GM12878 (cell line): ENCODE measurements at regions of chr10 and their contacts with region 1.

Region 1: GRCh38 chr10:106795619-106796018 is 368.9 kb downstream of the SORCS1 start:
- DNase-seq: peak; percentile 48
- ATAC-seq: peak; percentile 98
- H3K4me3 ChIP-seq: no peak overlapping the region
- H3K27ac ChIP-seq: no peak overlapping the region
- H3K4me1 ChIP-seq: no peaks in the 10 kb centered on the region
- H3K27me3 ChIP-seq: no peaks in the 10 kb centered on the region
- CTCF ChIP-seq: peak; percentile 57 to 78 (median 71)
- EP300 ChIP-seq: no peak
- POLR2A ChIP-seq: no peak
- RAD21 ChIP-seq: peak; percentile 88

Region 2: GRCh38 chr10:106696239-106696638 is 99.4 kb before region 1 on chr10:
- CTCF ChIA-PET with region 1: no interaction called
- POLR2A ChIA-PET with region 1: no interaction called
- RAD21 ChIA-PET with region 1: no interaction called
- SMC1A ChIA-PET with region 1: no interaction called
- in situ Hi-C with region 1: no loop called
- intact Hi-C with region 1: no loop called
- DNase-seq: no peak
- ATAC-seq: no peak
- H3K4me3 ChIP-seq: no peak overlapping the region
- H3K27ac ChIP-seq: no peak overlapping the region
- H3K4me1 ChIP-seq: no peaks in the 10 kb centered on the region
- H3K27me3 ChIP-seq: no peaks in the 10 kb centered on the region; a peak in 1 of 4 replicates
- CTCF ChIP-seq: no peak
- EP300 ChIP-seq: no peak
- POLR2A ChIP-seq: no peak
- RAD21 ChIP-seq: no peak

Region 3: GRCh38 chr10:106711313-106711906 is 84.2 kb before region 1 on chr10:
- CTCF ChIA-PET with region 1: interaction called, 16 read pairs
- POLR2A ChIA-PET with region 1: no interaction called
- RAD21 ChIA-PET with region 1: interaction called, 10 read pairs
- SMC1A ChIA-PET with region 1: interaction called, 8 read pairs
- in situ Hi-C with region 1: no loop called
- intact Hi-C with region 1: no loop called
- DNase-seq: no peak
- ATAC-seq: peak; percentile 57
- H3K4me3 ChIP-seq: no peak overlapping the region
- H3K27ac ChIP-seq: no peak overlapping the region
- H3K4me1 ChIP-seq: no peaks in the 10 kb centered on the region
- H3K27me3 ChIP-seq: no peaks in the 10 kb centered on the region
- CTCF ChIP-seq: peak; percentile 62 to 87 (median 82)
- EP300 ChIP-seq: no peak
- POLR2A ChIP-seq: no peak
- RAD21 ChIP-seq: peak; percentile 73

Region 4: GRCh38 chr10:106757521-106757920 is 38.1 kb before region 1 on chr10:
- CTCF ChIA-PET with region 1: no interaction called
- POLR2A ChIA-PET with region 1: no interaction called
- RAD21 ChIA-PET with region 1: no interaction called
- SMC1A ChIA-PET with region 1: no interaction called
- in situ Hi-C with region 1: no loop called
- intact Hi-C with region 1: no loop called
- DNase-seq: no peak
- ATAC-seq: no peak
- H3K4me3 ChIP-seq: no peak overlapping the region
- H3K27ac ChIP-seq: no peak overlapping the region
- H3K4me1 ChIP-seq: no peaks in the 10 kb centered on the region
- H3K27me3 ChIP-seq: no peaks in the 10 kb centered on the region
- CTCF ChIP-seq: no peak
- EP300 ChIP-seq: no peak
- POLR2A ChIP-seq: no peak
- RAD21 ChIP-seq: no peak

Region 5: DNA sequence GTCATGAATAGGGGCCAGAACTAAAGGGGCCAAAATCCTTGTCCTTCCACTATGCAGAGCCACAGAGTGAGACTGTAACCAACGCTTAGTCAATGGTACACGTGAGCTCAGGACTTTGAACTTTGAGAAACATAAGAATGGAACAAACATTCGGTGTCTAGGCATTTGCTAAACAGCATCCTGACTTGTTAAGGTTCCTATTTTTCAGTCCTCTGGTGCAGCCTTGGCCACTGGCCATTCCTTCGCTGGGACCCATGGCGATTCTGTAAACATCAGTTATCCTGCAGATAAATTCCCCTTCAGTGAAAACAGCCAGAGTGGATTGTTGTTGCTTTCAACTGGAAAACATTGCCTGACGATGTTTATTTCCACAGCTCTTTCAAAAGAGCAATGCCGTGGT is 102.1 kb after region 1 on chr10:
- CTCF ChIA-PET with region 1: no interaction called
- POLR2A ChIA-PET with region 1: no interaction called
- RAD21 ChIA-PET with region 1: no interaction called
- SMC1A ChIA-PET with region 1: no interaction called
- in situ Hi-C with region 1: no loop called
- intact Hi-C with region 1: no loop called
- DNase-seq: no peak
- ATAC-seq: no peak
- H3K4me3 ChIP-seq: no peak overlapping the region
- H3K27ac ChIP-seq: no peak overlapping the region
- H3K4me1 ChIP-seq: no peaks in the 10 kb centered on the region
- H3K27me3 ChIP-seq: no peaks in the 10 kb centered on the region
- CTCF ChIP-seq: no peak
- EP300 ChIP-seq: no peak
- POLR2A ChIP-seq: no peak
- RAD21 ChIP-seq: no peak

Region 6: GRCh38 chr10:106935978-106936451 is 140.4 kb after region 1 on chr10:
- CTCF ChIA-PET with region 1: interaction called, 3 read pairs
- POLR2A ChIA-PET with region 1: no interaction called
- RAD21 ChIA-PET with region 1: interaction called, 3 read pairs
- SMC1A ChIA-PET with region 1: no interaction called
- in situ Hi-C with region 1: no loop called
- intact Hi-C with region 1: loop called (anchors 5 kb)
- DNase-seq: peak; percentile 93
- ATAC-seq: peak; percentile 75
- H3K4me3 ChIP-seq: no peak overlapping the region; the same call in 1 of the 2 replicates
- H3K27ac ChIP-seq: peak overlapping the region; percentile 67
- H3K4me1 ChIP-seq: peaks cover 42% of the 10 kb centered on the region
- H3K27me3 ChIP-seq: no peaks in the 10 kb centered on the region
- CTCF ChIP-seq: no peak
- EP300 ChIP-seq: peak; percentile 38 to 97; a peak in 3 of 4 replicates
- POLR2A ChIP-seq: no peak
- RAD21 ChIP-seq: no peak

Region 7: DNA sequence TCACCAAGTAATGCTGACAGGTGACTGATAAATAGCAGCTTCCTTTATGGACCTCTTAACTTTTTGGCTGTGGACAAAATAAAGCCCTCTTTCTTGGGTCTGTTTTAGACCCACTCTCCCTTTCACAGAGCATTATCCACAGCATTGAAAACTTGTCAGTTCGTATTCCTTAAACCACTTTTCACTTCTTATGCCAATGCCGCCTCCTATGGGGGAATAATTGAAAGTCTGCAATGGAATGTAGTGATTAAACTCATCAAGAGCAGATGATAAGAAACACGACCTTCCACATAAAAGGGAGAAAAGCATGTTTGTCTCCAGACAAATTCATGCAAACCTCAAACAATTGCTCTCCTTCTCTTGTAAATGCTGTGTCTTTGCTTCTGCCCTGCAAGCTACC is 215.5 kb after region 1 on chr10:
- CTCF ChIA-PET with region 1: interaction called, 4 read pairs
- POLR2A ChIA-PET with region 1: no interaction called
- RAD21 ChIA-PET with region 1: no interaction called
- SMC1A ChIA-PET with region 1: interaction called, 3 read pairs
- in situ Hi-C with region 1: no loop called
- intact Hi-C with region 1: loop called (anchors 1 kb)
- DNase-seq: no peak
- ATAC-seq: no peak
- H3K4me3 ChIP-seq: no peak overlapping the region
- H3K27ac ChIP-seq: no peak overlapping the region
- H3K4me1 ChIP-seq: no peaks in the 10 kb centered on the region
- H3K27me3 ChIP-seq: no peaks in the 10 kb centered on the region
- CTCF ChIP-seq: peak in 2 of 3 experiments; percentile 16 to 23; a peak in 1 of 6 replicates
- EP300 ChIP-seq: no peak
- POLR2A ChIP-seq: no peak
- RAD21 ChIP-seq: peak; percentile 61

Region 8: GRCh38 chr10:107814865-107815487 is 1019.4 kb after region 1 on chr10:
- CTCF ChIA-PET with region 1: no interaction called
- POLR2A ChIA-PET with region 1: no interaction called
- RAD21 ChIA-PET with region 1: no interaction called
- SMC1A ChIA-PET with region 1: no interaction called
- in situ Hi-C with region 1: no loop called
- intact Hi-C with region 1: loop called (anchors 2 kb)
- DNase-seq: peak; percentile 20
- ATAC-seq: peak; percentile 95
- H3K4me3 ChIP-seq: no peak overlapping the region
- H3K27ac ChIP-seq: no peak overlapping the region
- H3K4me1 ChIP-seq: no peaks in the 10 kb centered on the region
- H3K27me3 ChIP-seq: no peaks in the 10 kb centered on the region
- CTCF ChIP-seq: peak; percentile 59 to 81 (median 74)
- EP300 ChIP-seq: no peak
- POLR2A ChIP-seq: no peak
- RAD21 ChIP-seq: peak; percentile 87